Heart left ventricle (tissue), 16 donors: ENCODE measurements at regions of chr20 and their contacts with region 1.

Region 1: DNA sequence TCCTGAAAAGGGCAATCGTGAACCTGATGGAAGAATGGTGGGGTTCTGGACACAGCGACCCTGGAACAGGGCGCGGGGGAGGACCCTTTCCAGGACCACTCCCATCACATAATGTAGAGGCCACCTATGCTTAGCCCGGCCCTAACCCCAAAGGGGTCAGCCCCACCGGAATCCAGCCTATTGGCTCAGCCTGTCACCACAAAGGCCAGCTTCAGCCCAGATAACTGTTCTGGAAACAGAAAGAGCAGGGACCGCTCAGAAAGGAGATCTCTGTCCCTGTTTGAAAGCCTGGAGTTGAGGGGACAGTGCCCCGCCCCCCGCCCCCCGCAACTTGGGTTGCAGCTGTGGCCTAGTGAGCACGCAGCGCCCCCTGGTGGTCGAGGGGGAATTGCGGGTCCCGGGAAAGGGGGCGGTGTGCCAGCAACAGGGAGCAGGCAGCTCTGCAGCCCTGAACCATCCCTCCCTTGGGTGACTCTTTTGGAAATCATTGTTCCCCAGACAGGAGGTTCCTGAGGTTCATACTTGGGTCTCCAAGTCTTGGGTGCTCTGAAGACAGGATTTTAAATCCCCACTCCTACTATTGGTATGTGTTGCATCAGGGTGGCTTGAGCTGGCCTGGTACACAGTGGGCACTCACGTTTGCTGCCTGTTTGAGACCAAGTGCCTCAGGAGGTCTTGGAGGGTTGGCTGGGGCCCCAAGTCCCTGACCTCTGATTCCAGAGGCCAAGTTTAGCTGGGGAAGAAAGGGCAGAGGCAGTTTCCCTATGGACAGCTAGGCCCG is 1.5 kb downstream of the SIGLEC1 start:
- DNase-seq: peak; percentile 68 to 91 (median 79)
- ATAC-seq: peak; percentile 29 to 57 (median 43)
- H3K4me3 ChIP-seq: peak overlapping the region in 6 of 12 donors; percentile 4 to 50 (median 17)
- H3K27ac ChIP-seq: peak overlapping the region in 7 of 12 donors; percentile 13 to 79 (median 30)
- H3K4me1 ChIP-seq: peaks cover 0 to 40% (median 11%) of the 10 kb centered on the region in 12 donors
- H3K27me3 ChIP-seq: no peaks in the 10 kb centered on the region
- CTCF ChIP-seq: peak; percentile 87 to 99 (median 98)
- POLR2A ChIP-seq: no peak

Region 2: GRCh38 chr20:3010985-3011723 is 699.7 kb before region 1 on chr20:
- intact Hi-C with region 1: no loop called
- DNase-seq: no peak
- ATAC-seq: no peak
- H3K4me3 ChIP-seq: no peak overlapping the region
- H3K27ac ChIP-seq: no peak overlapping the region
- H3K4me1 ChIP-seq: no peaks in the 10 kb centered on the region
- H3K27me3 ChIP-seq: no peaks in the 10 kb centered on the region
- CTCF ChIP-seq: no peak
- POLR2A ChIP-seq: no peak

Region 3: GRCh38 chr20:3563548-3564177 is 147.2 kb before region 1 on chr20:
- intact Hi-C with region 1: loop called in 2 of 10 experiments (anchors 5 to 10 kb)
- DNase-seq: no peak
- ATAC-seq: peak in 1 of 4 donors; percentile 48
- H3K4me3 ChIP-seq: no peak overlapping the region
- H3K27ac ChIP-seq: no peak overlapping the region
- H3K4me1 ChIP-seq: peaks cover 0 to 17% (median 0%) of the 10 kb centered on the region in 12 donors
- H3K27me3 ChIP-seq: no peaks in the 10 kb centered on the region
- CTCF ChIP-seq: peak; percentile 44 to 76 (median 62)
- POLR2A ChIP-seq: no peak

Region 4: GRCh38 chr20:3572151-3572550 is 138.7 kb before region 1 on chr20:
- intact Hi-C with region 1: loop called in 2 of 10 experiments (anchors 10 kb)
- DNase-seq: no peak
- ATAC-seq: no peak
- H3K4me3 ChIP-seq: no peak overlapping the region
- H3K27ac ChIP-seq: no peak overlapping the region
- H3K4me1 ChIP-seq: no peaks in the 10 kb centered on the region
- H3K27me3 ChIP-seq: no peaks in the 10 kb centered on the region
- CTCF ChIP-seq: no peak
- POLR2A ChIP-seq: no peak

Region 5: GRCh38 chr20:3674447-3674846 is 36.4 kb before region 1 on chr20:
- intact Hi-C with region 1: loop called (anchors 1 to 2 kb)
- DNase-seq: peak in 1 of 5 donors; percentile 13
- ATAC-seq: no peak
- H3K4me3 ChIP-seq: no peak overlapping the region
- H3K27ac ChIP-seq: no peak overlapping the region
- H3K4me1 ChIP-seq: peaks cover 0 to 31% (median 19%) of the 10 kb centered on the region in 12 donors
- H3K27me3 ChIP-seq: peaks cover 8 to 52% (median 36%) of the 10 kb centered on the region in 9 donors
- CTCF ChIP-seq: no peak
- POLR2A ChIP-seq: no peak

Region 6: DNA sequence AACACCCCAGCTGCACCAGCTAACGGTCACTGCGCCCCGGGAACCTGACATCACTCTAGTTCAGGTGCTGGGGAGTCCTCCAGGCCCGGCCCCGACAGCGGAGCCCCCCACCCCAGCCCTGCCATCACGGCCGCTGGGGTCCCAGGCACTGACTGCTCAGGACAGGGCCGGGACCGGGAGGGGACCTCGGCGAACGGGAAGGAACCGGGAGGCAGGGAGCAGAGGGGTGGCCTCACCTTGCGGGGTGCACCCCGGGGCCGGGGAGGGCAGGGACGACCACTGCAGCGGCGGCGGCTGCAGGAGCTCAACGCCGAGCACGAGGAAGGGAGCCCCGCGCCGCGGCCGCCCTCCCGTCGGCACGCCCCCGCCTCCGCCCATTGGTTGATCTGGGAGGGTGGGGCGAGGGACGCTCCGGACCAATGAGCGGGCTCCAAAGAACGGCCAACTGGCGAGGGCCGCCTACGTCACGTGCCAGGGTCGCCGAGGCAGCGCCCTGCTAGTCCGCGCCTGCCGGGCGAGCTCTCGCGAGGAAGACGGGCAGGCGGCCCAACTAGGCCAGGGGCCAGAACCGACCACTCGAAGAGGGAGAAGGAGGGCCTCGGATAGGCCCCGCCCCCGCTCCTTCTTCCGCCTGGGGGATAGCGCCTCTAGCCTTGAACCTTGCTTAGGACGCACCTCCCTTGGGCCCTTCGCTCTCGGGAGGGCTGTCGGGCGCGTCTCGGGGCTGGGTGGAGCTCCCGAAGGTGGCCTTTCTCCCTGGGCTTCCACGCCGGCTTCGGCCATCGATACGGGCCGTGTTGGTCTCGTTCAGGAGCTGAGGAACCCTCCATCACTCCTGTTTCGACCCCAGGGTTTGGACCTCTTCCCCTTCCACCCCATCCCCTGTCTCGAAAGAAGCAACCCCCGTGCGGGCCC is 56.8 kb after region 1 on chr20 and contains the start of gene ADISSP:
- intact Hi-C with region 1: loop called in 5 of 10 experiments (anchors 2 to 10 kb)
- DNase-seq: peak; percentile 99 to 100 (median 99)
- ATAC-seq: peak; percentile 96 to 98 (median 96)
- H3K4me3 ChIP-seq: peak within 1 kb of the TSS; percentile 49 to 78 (median 69)
- H3K27ac ChIP-seq: peak within 1 kb of the TSS; percentile 54 to 96 (median 86)
- H3K4me1 ChIP-seq: peaks cover 0 to 47% (median 22%) of the 10 kb centered on the region in 12 donors
- H3K27me3 ChIP-seq: no peaks in the 10 kb centered on the region
- CTCF ChIP-seq: peak in 4 of 12 donors; percentile 21 to 44 (median 28)
- POLR2A ChIP-seq: peak in 1 of 2 donors; percentile 69
- total RNA-seq, gene ADISSP: 7.8 to 22.2 (median 13.7) TPM

Region 7: DNA sequence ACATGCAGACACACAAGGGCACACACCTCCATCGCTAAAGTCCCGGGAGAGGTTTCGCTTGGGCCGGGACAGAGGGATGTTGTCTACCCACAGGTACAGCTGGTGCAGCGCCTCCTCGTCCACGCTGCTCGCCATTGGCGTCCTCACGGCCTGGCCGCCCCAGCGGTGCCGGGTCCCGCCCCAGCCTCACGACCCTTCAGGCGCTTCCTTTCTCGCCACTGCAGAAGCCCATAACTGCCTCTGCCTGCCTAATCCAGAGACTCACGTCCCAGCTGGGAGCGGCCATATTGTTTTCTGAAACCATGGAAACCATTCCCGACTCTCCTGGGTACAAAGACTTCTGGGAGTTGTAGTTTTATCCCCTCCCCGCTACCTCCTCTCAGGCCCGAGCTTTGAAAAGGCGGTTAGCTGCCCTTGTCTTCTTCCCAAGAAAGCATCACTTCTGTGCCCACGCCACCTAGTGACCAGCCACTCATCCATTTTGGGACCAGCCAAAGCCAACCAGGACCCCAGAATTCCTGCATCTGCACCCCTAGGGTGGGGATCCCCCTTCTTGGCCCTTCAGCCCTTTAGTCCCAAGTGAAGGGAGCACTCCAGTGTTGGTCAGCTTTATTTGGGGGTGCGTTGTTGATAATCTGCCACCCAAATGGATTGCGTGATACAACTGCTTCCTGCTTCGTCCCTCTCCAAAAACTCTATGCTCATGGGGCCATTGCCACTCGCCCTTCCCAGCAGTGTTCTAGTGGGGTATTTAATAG is 70.4 kb after region 1 on chr20 and contains the start of gene SPEF1:
- intact Hi-C with region 1: loop called in 1 of 10 experiments (anchors 10 kb)
- DNase-seq: peak; percentile 68 to 85 (median 81)
- ATAC-seq: peak; percentile 80 to 90 (median 84)
- H3K4me3 ChIP-seq: peak within 1 kb of the TSS in 11 of 12 donors; percentile 17 to 58 (median 46)
- H3K27ac ChIP-seq: peak within 1 kb of the TSS in 4 of 12 donors; percentile 7 to 52 (median 42)
- H3K4me1 ChIP-seq: peaks cover 4 to 55% (median 42%) of the 10 kb centered on the region in 12 donors
- H3K27me3 ChIP-seq: peaks cover 0 to 5% (median 0%) of the 10 kb centered on the region in 9 donors
- CTCF ChIP-seq: peak in 11 of 12 donors; percentile 21 to 54 (median 39)
- POLR2A ChIP-seq: no peak
- total RNA-seq, gene SPEF1: 0.18 to 0.65 (median 0.30) TPM in 4 of 9 donors, not detected in the others

Region 8: GRCh38 chr20:4082406-4083097 is 371.7 kb after region 1 on chr20:
- intact Hi-C with region 1: loop called in 1 of 10 experiments (anchors 10 kb)
- DNase-seq: peak in 4 of 5 donors; percentile 49 to 61 (median 51)
- ATAC-seq: peak in 3 of 4 donors; percentile 37 to 54 (median 50)
- H3K4me3 ChIP-seq: no peak overlapping the region
- H3K27ac ChIP-seq: peak overlapping the region in 4 of 12 donors; percentile 54 to 80 (median 64)
- H3K4me1 ChIP-seq: peaks cover 0 to 42% (median 8%) of the 10 kb centered on the region in 12 donors
- H3K27me3 ChIP-seq: no peaks in the 10 kb centered on the region
- CTCF ChIP-seq: no peak
- POLR2A ChIP-seq: no peak